ENCODE measurements at regions of chr15 and their contacts with region 1.

Region 1: DNA sequence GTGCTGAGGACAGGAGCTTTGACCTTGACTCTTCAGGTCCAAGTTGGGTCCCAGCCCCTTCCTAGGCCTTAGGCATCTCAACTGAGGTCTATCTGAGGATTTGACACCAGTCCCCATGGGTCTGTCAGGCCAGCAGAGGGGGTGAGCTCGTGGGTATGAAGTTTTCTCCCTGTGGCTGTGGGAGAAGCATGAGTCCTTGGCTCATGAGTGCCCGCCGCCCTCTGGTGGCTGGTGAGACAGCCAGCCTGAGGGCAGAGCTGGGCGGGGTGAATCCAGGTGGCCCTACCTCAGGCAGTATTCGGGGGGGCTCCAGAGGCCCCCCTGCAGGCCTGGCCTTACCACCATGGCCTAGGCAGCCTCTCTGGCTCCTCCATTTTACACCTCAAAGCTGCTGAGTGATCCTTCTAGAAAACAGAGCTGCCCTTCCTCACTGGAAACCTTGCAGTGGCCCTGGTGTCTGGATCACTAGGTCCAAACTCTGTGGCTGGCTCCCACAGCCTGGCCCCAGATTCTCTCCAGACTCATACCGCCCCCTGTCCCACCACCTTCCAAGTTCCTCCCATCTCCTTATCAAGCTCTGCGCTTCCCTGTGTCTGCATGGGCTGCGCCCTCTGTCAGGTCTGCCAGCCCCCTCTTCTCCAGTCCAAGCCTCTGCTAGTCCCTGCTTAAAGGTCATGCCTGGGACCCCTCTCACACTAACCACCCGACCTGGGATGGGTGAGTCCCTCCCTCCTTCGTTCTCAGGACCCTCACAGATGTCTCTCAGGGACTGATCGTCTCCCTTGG is 16.1 kb downstream of the SH2D7 start:
- DNase-seq: peak; percentile 62
- H3K4me3 ChIP-seq: no peak overlapping the region
- H3K27ac ChIP-seq: no peak overlapping the region
- H3K4me1 ChIP-seq: no peaks in the 10 kb centered on the region
- H3K27me3 ChIP-seq: no peaks in the 10 kb centered on the region
- CTCF ChIP-seq: peak; percentile 65 to 91

Region 2: GRCh38 chr15:77959432-77959879 is 149.0 kb before region 1 on chr15:
- CTCF ChIA-PET with region 1: interaction called, 5 read pairs
- dilution Hi-C with region 1: no loop called
- in situ Hi-C with region 1: no loop called
- intact Hi-C with region 1: loop called (anchors 2 kb)
- DNase-seq: peak; percentile 57
- H3K4me3 ChIP-seq: peak overlapping the region in 2 of 3 experiments; percentile 21 to 28
- H3K27ac ChIP-seq: no peak overlapping the region
- H3K4me1 ChIP-seq: peaks cover 4% of the 10 kb centered on the region
- H3K27me3 ChIP-seq: no peaks in the 10 kb centered on the region
- CTCF ChIP-seq: peak; percentile 83 to 98

Region 3: GRCh38 chr15:78000091-78000926 is 108.2 kb before region 1 on chr15:
- CTCF ChIA-PET with region 1: no interaction called
- dilution Hi-C with region 1: no loop called
- in situ Hi-C with region 1: no loop called
- intact Hi-C with region 1: loop called (anchors 1 kb)
- DNase-seq: peak; percentile 16
- H3K4me3 ChIP-seq: no peak overlapping the region
- H3K27ac ChIP-seq: no peak overlapping the region
- H3K4me1 ChIP-seq: peaks cover 2% of the 10 kb centered on the region
- H3K27me3 ChIP-seq: no peaks in the 10 kb centered on the region
- CTCF ChIP-seq: peak; percentile 9 to 26

Region 4: GRCh38 chr15:78077058-78077877 is 31.2 kb before region 1 on chr15 and contains the start of gene TBC1D2B:
- CTCF ChIA-PET with region 1: no interaction called
- dilution Hi-C with region 1: no loop called
- in situ Hi-C with region 1: no loop called
- intact Hi-C with region 1: no loop called
- DNase-seq: peak; percentile 55
- H3K4me3 ChIP-seq: peak within 1 kb of the TSS; percentile 62 to 82 (median 78)
- H3K27ac ChIP-seq: no peak within 1 kb of the TSS
- H3K4me1 ChIP-seq: peaks cover 11% of the 10 kb centered on the region
- H3K27me3 ChIP-seq: no peaks in the 10 kb centered on the region
- CTCF ChIP-seq: no peak
- total RNA-seq, gene TBC1D2B: 15.7 to 24.0 TPM

Region 5: GRCh38 chr15:78131295-78132061 is 23.0 kb after region 1 on chr15 and contains the start of gene CIB2:
- CTCF ChIA-PET with region 1: no interaction called
- dilution Hi-C with region 1: no loop called
- in situ Hi-C with region 1: no loop called
- intact Hi-C with region 1: no loop called
- DNase-seq: no peak
- H3K4me3 ChIP-seq: peak within 1 kb of the TSS; percentile 39 to 63 (median 56)
- H3K27ac ChIP-seq: peak within 1 kb of the TSS; percentile 24
- H3K4me1 ChIP-seq: peaks cover 21% of the 10 kb centered on the region
- H3K27me3 ChIP-seq: no peaks in the 10 kb centered on the region
- CTCF ChIP-seq: peak; percentile 51 to 58
- total RNA-seq, gene CIB2: 5.4 to 6.5 TPM

Region 6: GRCh38 chr15:78241007-78241406 is 132.5 kb after region 1 on chr15:
- CTCF ChIA-PET with region 1: interaction called, 10 read pairs
- dilution Hi-C with region 1: no loop called
- in situ Hi-C with region 1: loop called (anchors 5 kb)
- intact Hi-C with region 1: loop called (anchors 1 kb)
- DNase-seq: peak; percentile 53
- H3K4me3 ChIP-seq: no peak overlapping the region
- H3K27ac ChIP-seq: no peak overlapping the region
- H3K4me1 ChIP-seq: peaks cover 7% of the 10 kb centered on the region
- H3K27me3 ChIP-seq: peaks cover 2% of the 10 kb centered on the region
- CTCF ChIP-seq: peak; percentile 68 to 93

Region 7: GRCh38 chr15:78709263-78709882 is 600.9 kb after region 1 on chr15:
- CTCF ChIA-PET with region 1: no interaction called
- dilution Hi-C with region 1: no loop called
- in situ Hi-C with region 1: no loop called
- intact Hi-C with region 1: loop called (anchors 5 kb)
- DNase-seq: peak; percentile 33
- H3K4me3 ChIP-seq: peak overlapping the region in 2 of 3 experiments; percentile 2 to 12
- H3K27ac ChIP-seq: no peak overlapping the region
- H3K4me1 ChIP-seq: no peaks in the 10 kb centered on the region
- H3K27me3 ChIP-seq: peaks cover 2% of the 10 kb centered on the region
- CTCF ChIP-seq: peak; percentile 50 to 92